OCI-LY7 (cell line): ENCODE measurements at regions of chr6 and their contacts with region 1.

Region 1: DNA sequence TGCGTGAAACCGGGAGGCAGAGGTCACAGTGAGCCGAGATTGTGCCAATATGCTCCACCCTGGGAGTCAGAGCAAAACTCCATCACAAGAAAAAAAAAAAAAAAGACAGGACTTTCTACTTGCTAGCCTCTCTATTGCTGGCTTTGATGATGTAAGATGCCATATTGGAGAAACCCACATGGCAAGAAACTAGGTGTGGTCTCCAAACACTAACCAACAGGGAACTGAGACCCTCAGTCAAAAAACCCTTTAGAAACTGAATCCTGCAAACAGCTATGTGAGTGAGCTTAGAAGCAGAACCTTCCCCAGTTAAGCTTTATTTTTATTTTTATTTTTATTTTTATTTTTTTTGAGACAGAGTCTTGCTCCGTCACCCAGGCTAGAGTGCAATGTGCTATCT is 18.4 kb upstream of the ZBTB22 start:
- DNase-seq: no peak
- H3K4me3 ChIP-seq: no peak overlapping the region
- H3K27ac ChIP-seq: no peak overlapping the region
- H3K4me1 ChIP-seq: peaks cover 26% of the 10 kb centered on the region
- CTCF ChIP-seq: no peak

Region 2: DNA sequence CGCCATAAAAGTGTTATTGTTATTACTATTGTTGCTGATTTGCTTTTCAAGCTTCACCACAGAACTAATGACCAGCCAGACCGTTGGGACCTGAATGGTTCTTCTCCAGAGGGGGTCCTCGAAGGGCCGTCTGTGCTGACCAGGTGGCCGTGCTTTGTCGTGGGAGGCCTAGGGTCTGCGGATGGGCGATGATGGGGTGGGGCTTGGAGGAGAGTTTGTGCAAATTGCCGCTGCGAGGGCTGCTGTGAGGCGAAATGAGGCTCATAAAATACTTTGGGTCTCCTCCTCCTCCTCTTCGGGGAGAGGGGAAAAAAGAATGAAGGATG is 12.3 kb before region 1 on chr6:
- CTCF ChIA-PET with region 1: no interaction called
- POLR2A ChIA-PET with region 1: interaction called, 21 read pairs
- intact Hi-C with region 1: no loop called
- DNase-seq: no peak
- H3K4me3 ChIP-seq: peak overlapping the region; percentile 88
- H3K27ac ChIP-seq: peak overlapping the region; percentile 98
- H3K4me1 ChIP-seq: peaks cover 56% of the 10 kb centered on the region
- CTCF ChIP-seq: no peak